ENCODE measurements at regions of chr5 and their contacts with region 1.

Region 1: GRCh38 chr5:138702308-138703077 is 50.7 kb upstream of the CTNNA1 start:
- DNase-seq: no peak
- H3K4me3 ChIP-seq: no peak overlapping the region
- H3K27ac ChIP-seq: no peak overlapping the region
- H3K4me1 ChIP-seq: no peaks in the 10 kb centered on the region
- H3K27me3 ChIP-seq: peaks cover 8 to 14% of the 10 kb centered on the region in 2 experiments
- CTCF ChIP-seq: no peak
- POLR2A ChIP-seq: no peak

Region 2: DNA sequence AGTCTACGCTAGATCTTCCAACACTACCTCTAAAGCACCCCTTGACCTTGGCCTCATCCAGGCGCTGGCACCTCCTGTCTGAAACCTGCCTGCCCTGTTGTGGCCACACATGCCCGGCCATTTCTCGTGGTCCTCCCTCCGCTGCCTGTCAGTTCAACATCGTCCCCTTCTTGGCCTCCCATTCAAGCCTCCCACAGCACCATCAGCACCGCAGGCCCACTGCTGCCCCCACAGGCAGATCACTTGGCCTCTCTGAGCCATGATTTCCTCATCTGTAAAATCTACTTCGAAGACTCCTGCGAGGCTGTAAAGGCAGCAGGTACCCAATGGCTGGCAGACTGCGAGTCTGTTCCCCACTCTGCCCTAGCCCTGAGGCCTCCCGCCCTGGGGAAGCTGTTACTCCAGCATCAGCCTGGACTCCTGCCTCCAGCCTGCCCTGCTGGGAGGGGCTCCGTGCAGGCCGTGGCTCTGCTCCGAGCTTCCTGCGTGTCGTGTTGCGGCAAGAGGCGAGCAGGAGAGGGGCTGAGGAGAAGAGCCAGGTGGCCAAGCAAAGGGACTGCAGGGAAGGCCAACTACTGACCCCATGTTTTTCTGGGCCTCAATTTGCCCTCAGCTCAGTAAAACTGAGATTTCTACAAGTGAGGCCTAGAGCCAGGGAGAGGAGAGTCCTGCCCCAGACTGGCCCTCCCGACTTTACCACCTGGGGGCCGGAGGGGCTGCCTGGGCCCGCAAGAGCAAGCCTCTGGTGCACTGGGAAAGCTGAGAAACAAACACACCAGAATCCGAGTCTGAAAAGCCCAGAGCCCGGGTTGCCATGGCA is 243.1 kb after region 1 on chr5:
- CTCF ChIA-PET with region 1: no interaction called
- POLR2A ChIA-PET with region 1: no interaction called
- dilution Hi-C with region 1: no loop called
- intact Hi-C with region 1: no loop called
- DNase-seq: no peak
- H3K4me3 ChIP-seq: no peak overlapping the region
- H3K27ac ChIP-seq: no peak overlapping the region
- H3K4me1 ChIP-seq: no peaks in the 10 kb centered on the region
- H3K27me3 ChIP-seq: no peaks in the 10 kb centered on the region
- CTCF ChIP-seq: peak in 1 of 2 donors; percentile 7
- POLR2A ChIP-seq: no peak

Region 3: DNA sequence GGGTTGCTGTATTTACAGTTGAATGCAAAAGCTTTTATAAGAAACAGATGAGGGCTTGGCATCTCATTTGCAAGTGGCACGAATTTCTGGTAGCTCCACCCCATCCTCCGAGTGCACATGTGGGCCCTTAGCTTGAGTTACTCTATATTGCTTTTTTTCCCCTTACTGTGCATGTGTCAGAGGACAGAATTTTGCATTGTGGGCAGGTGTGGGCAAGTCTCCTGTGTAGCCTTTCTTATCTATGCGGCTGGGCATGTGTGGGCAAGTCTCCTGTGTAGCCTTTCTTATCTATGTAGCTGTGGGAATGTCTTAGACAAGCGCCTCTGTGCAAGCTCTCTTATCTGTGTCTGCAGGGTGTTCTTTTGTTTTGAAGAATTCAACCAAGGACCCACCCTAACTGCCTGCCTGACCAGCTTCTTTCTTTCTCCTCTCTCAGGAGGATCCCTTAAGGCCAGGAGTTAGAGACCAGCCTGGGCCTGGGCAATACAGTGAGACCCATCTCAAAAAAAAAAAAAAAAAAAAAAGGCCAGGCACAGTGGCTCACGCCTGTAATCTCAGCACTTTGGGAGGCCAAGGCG is 529.7 kb after region 1 on chr5:
- CTCF ChIA-PET with region 1: no interaction called
- POLR2A ChIA-PET with region 1: interaction called, 10 read pairs
- dilution Hi-C with region 1: no loop called
- intact Hi-C with region 1: no loop called
- DNase-seq: no peak
- H3K4me3 ChIP-seq: no peak overlapping the region
- H3K27ac ChIP-seq: no peak overlapping the region
- H3K4me1 ChIP-seq: no peaks in the 10 kb centered on the region
- H3K27me3 ChIP-seq: peaks cover 0 to 4% of the 10 kb centered on the region in 2 experiments
- CTCF ChIP-seq: no peak
- POLR2A ChIP-seq: no peak

Measured in endothelial cell of umbilical vein (primary cell).